IMR-90 (cell line): ENCODE measurements at regions of chr17 and their contacts with region 1.

Region 1: GRCh38 chr17:49031965-49032928 is 35.1 kb downstream of the IGF2BP1 start:
- DNase-seq: peak; percentile 81
- ATAC-seq: peak; percentile 87
- H3K4me3 ChIP-seq: no peak overlapping the region
- H3K27ac ChIP-seq: no peak overlapping the region
- H3K4me1 ChIP-seq: no peaks in the 10 kb centered on the region
- H3K27me3 ChIP-seq: no peaks in the 10 kb centered on the region
- CTCF ChIP-seq: peak; percentile 97
- POLR2A ChIP-seq: no peak
- RAD21 ChIP-seq: peak; percentile 99

Region 2: GRCh38 chr17:48804925-48805411 is 227.3 kb before region 1 on chr17:
- CTCF ChIA-PET with region 1: no interaction called
- POLR2A ChIA-PET with region 1: no interaction called
- dilution Hi-C with region 1: no loop called
- in situ Hi-C with region 1: loop called (anchors 10 kb)
- intact Hi-C with region 1: loop called (anchors 5 kb)
- DNase-seq: peak; percentile 37
- ATAC-seq: peak; percentile 98
- H3K4me3 ChIP-seq: no peak overlapping the region
- H3K27ac ChIP-seq: no peak overlapping the region
- H3K4me1 ChIP-seq: peaks cover 7% of the 10 kb centered on the region
- H3K27me3 ChIP-seq: peaks cover 4% of the 10 kb centered on the region
- CTCF ChIP-seq: peak; percentile 87
- POLR2A ChIP-seq: 0 out of 2 replicates have a peak, but pooled peaks have one; percentile 31
- RAD21 ChIP-seq: peak; percentile 86

Region 3: DNA sequence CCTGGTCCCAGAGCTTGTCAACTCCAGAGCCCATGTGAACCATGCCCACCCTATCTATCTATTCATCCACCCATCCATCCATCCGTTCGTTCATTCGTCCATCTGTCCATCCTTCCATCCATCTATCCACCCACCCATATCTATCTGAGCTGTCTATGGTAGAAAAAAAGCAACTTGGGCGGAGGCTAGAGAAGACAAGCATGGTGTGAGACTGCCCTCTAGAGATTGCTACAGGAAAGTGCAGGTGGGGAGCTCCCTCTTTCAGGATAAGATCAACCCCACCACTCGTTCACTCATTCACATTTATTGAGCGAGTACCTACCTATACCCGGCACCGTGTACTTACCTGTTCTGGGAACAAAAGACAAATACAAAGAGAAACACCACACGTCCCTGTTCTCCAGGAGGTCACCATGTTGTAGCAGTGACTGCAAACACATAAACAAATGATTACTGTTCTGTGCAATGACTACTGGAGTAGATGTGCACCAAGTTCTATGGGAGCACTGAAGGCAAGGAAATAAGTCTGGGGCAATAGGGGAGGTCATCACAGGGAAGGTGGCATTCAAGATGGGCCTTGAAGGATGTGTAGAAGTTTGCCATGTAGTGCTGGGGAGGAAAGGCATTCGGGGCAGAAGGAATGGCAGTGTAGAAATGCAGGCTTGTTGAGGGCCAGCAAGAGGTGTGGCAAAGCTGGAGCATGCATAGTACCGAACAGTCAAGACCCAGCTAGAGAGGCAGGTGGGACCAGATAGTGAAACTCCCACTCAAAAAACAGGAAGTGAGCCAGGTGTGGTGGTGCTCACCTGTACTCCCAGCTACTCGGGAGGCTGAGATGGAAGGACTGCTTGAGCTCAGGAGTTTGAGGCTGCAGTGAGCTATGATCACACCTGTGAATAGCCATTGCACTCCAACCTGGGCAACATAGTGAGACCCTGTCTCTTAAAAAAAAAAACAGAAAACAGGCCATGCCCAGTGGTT is 153.0 kb before region 1 on chr17:
- CTCF ChIA-PET with region 1: interaction called, 7 read pairs
- POLR2A ChIA-PET with region 1: no interaction called
- dilution Hi-C with region 1: no loop called
- in situ Hi-C with region 1: no loop called
- intact Hi-C with region 1: loop called (anchors 1 kb)
- DNase-seq: peak; percentile 66
- ATAC-seq: peak; percentile 99
- H3K4me3 ChIP-seq: no peak overlapping the region
- H3K27ac ChIP-seq: no peak overlapping the region
- H3K4me1 ChIP-seq: no peaks in the 10 kb centered on the region
- H3K27me3 ChIP-seq: peaks cover 2% of the 10 kb centered on the region
- CTCF ChIP-seq: peak; percentile 97
- POLR2A ChIP-seq: 0 out of 2 replicates have a peak, but pooled peaks have one; percentile 36
- RAD21 ChIP-seq: peak; percentile 98

Region 4: GRCh38 chr17:48933035-48933434 is 99.2 kb before region 1 on chr17:
- CTCF ChIA-PET with region 1: interaction called, 4 read pairs
- POLR2A ChIA-PET with region 1: no interaction called
- dilution Hi-C with region 1: no loop called
- in situ Hi-C with region 1: loop called (anchors 5 kb)
- intact Hi-C with region 1: loop called (anchors 1 kb)
- DNase-seq: no peak
- ATAC-seq: no peak
- H3K4me3 ChIP-seq: no peak overlapping the region
- H3K27ac ChIP-seq: no peak overlapping the region
- H3K4me1 ChIP-seq: no peaks in the 10 kb centered on the region; the same call in 1 of the 2 replicates
- H3K27me3 ChIP-seq: no peaks in the 10 kb centered on the region
- CTCF ChIP-seq: no peak
- POLR2A ChIP-seq: no peak
- RAD21 ChIP-seq: no peak

Region 5: DNA sequence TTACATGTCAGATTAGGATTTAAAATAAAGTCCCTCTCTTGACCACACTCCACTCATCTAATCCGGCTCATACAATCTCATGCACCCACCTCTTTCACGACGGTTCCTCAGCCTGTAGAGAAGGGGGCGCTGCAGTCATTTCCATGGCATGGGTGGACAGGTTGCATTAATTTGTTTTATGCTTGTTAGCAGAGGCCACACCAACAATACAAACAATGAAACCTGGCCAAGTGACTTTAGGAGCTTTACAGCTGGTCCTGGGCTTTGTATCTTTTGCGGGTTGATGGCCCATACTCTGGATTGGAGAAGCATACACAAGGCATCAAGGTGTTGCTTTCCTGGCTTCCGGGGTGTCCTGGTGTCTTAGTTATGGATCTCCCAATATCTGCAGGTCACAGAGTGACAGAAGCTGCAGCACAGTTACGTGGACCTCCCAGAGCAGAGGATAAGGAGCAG is 77.9 kb before region 1 on chr17:
- CTCF ChIA-PET with region 1: interaction called, 9 read pairs
- POLR2A ChIA-PET with region 1: no interaction called
- dilution Hi-C with region 1: no loop called
- in situ Hi-C with region 1: no loop called
- intact Hi-C with region 1: loop called (anchors 1 kb)
- DNase-seq: peak; percentile 49
- ATAC-seq: peak; percentile 79
- H3K4me3 ChIP-seq: no peak overlapping the region
- H3K27ac ChIP-seq: no peak overlapping the region
- H3K4me1 ChIP-seq: peaks cover 3% of the 10 kb centered on the region; the same call in 1 of the 2 replicates
- H3K27me3 ChIP-seq: no peaks in the 10 kb centered on the region
- CTCF ChIP-seq: peak; percentile 69
- POLR2A ChIP-seq: no peak
- RAD21 ChIP-seq: peak; percentile 77

Region 6: GRCh38 chr17:49003623-49004511 is 28.4 kb before region 1 on chr17:
- CTCF ChIA-PET with region 1: interaction called, 16 read pairs
- POLR2A ChIA-PET with region 1: interaction called, 8 read pairs
- dilution Hi-C with region 1: no loop called
- in situ Hi-C with region 1: no loop called
- intact Hi-C with region 1: loop called (anchors 1 kb)
- DNase-seq: peak; percentile 37
- ATAC-seq: peak; percentile 74
- H3K4me3 ChIP-seq: peak overlapping the region; percentile 96
- H3K27ac ChIP-seq: peak overlapping the region; percentile 84
- H3K4me1 ChIP-seq: peaks cover 6% of the 10 kb centered on the region
- H3K27me3 ChIP-seq: no peaks in the 10 kb centered on the region
- CTCF ChIP-seq: no peak
- POLR2A ChIP-seq: no peak
- RAD21 ChIP-seq: no peak; the same call in 1 of the 2 replicates

Region 7: GRCh38 chr17:49117587-49118230 is 85.5 kb after region 1 on chr17:
- CTCF ChIA-PET with region 1: no interaction called
- POLR2A ChIA-PET with region 1: no interaction called
- dilution Hi-C with region 1: no loop called
- in situ Hi-C with region 1: no loop called
- intact Hi-C with region 1: no loop called
- DNase-seq: no peak
- ATAC-seq: no peak
- H3K4me3 ChIP-seq: no peak overlapping the region
- H3K27ac ChIP-seq: no peak overlapping the region
- H3K4me1 ChIP-seq: no peaks in the 10 kb centered on the region
- H3K27me3 ChIP-seq: peaks cover 18% of the 10 kb centered on the region
- CTCF ChIP-seq: no peak
- POLR2A ChIP-seq: no peak
- RAD21 ChIP-seq: no peak